Activated CD4-positive, alpha-beta T cell treated with anti-CD3 and anti-CD28 coated beads for 36 hours (primary cell): ENCODE measurements at regions of chr19 and their contacts with region 1.

Region 1: DNA sequence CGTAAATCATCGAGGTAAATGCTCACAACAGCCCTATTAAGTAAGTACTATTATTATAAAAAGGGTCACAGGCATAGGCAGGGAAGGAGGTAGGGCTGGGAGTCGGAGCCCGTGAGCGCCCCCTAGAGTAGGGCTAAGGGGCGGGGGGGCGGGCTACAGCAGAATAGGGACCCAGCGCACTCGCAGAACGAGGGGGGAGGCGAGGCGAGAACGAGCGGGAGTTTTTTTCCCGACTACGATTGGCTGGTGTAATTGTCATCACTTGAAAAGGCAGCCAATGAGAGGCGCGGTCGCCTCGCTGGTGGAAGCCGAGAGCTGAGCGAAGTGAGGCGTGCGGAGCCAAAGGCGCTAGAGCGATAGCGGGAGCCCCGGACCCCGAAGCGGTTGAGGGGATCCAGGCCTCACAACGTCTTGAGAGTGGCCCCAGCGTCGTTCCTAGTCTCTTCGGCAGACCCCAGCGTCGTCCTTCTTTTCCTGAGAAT is 24.2 kb downstream of the KEAP1 start:
- DNase-seq: peak; percentile 94
- ATAC-seq: peak; percentile 99
- H3K4me3 Mint-ChIP-seq: peak overlapping the region; percentile 38
- H3K27ac Mint-ChIP-seq: peak overlapping the region; percentile 47
- H3K4me1 Mint-ChIP-seq: peaks cover 13% of the 10 kb centered on the region
- H3K27me3 Mint-ChIP-seq: no peaks in the 10 kb centered on the region

Region 2: GRCh38 chr19:10292206-10292788 is 186.6 kb before region 1 on chr19:
- CTCF ChIA-PET with region 1: no interaction called
- POLR2A ChIA-PET with region 1: no interaction called
- intact Hi-C with region 1: loop called in 1 of 2 experiments (anchors 1 kb)
- DNase-seq: peak; percentile 92
- ATAC-seq: peak; percentile 63
- H3K4me3 Mint-ChIP-seq: peak overlapping the region; percentile 66
- H3K27ac Mint-ChIP-seq: no peak overlapping the region
- H3K4me1 Mint-ChIP-seq: peaks cover 59% of the 10 kb centered on the region
- H3K27me3 Mint-ChIP-seq: peaks cover 70% of the 10 kb centered on the region

Region 3: DNA sequence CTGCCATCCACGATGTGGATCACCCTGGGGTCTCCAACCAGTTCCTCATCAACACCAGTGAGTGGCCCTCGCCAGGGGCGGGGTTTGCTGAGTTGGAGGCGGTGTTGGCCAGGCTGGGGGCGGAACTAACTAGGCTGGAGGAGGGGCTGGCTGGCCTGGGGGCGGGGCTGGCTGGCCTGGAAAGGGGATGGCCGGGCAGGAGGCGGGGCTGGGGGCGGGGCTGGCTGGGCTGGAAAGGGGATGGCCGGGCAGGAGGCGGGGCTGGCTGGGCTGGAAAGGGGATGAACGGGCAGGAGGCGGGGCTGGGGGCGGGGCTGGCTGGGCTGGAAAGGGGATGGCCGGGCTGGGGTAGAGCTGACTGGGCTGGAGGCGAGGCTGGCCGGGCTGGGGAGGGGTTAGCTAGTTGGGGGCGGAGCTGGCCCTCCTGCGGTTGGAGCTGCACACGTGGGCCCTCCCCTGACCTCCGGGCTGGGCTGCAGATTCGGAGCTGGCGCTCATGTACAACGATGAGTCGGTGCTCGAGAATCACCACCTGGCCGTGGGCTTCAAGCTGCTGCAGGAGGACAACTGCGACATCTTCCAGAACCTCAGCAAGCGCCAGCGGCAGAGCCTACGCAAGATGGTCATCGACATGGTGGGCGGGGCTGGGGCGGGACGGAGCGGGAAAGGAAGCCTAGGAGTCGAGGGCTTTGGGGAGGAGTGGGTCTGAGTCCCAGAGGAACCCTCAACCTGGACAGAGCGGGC is 17.7 kb before region 1 on chr19:
- CTCF ChIA-PET with region 1: interaction called, 6 read pairs
- POLR2A ChIA-PET with region 1: no interaction called
- intact Hi-C with region 1: loop called in 1 of 2 experiments (anchors 1 kb)
- DNase-seq: peak; percentile 98
- ATAC-seq: peak; percentile 98
- H3K4me3 Mint-ChIP-seq: peak overlapping the region; percentile 43
- H3K27ac Mint-ChIP-seq: no peak overlapping the region
- H3K4me1 Mint-ChIP-seq: peaks cover 9% of the 10 kb centered on the region
- H3K27me3 Mint-ChIP-seq: peaks cover 3% of the 10 kb centered on the region

Region 4: DNA sequence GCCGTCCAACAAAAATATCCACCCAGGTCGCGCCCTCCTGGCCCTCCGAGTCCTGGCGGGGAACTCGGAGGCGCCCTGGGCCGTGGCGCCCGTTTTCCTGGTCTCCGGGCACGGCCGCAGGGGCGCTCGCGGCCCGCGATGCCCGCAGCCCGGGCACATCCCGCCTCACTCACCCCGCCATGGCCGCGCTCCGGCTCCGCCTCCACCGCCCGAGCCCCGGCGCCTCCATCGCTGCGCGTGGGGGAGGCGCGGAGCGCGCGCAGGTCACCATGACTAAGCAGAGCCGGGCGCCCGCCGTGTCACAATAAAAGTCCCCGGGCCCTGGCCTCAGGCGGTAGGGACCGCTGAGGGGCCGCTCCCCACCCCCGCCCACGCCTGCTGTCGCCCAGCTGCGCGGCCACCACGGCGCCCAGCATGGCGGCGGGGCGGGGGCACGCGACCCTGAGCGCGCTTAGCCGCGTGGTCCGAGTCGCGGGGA is 23.6 kb after region 1 on chr19:
- CTCF ChIA-PET with region 1: interaction called, 5 read pairs
- POLR2A ChIA-PET with region 1: interaction called, 5 read pairs
- intact Hi-C with region 1: loop called (anchors 1 to 2 kb)
- DNase-seq: peak; percentile 95
- ATAC-seq: peak; percentile 91
- H3K4me3 Mint-ChIP-seq: peak overlapping the region; percentile 91
- H3K27ac Mint-ChIP-seq: peak overlapping the region; percentile 95
- H3K4me1 Mint-ChIP-seq: peaks cover 30% of the 10 kb centered on the region
- H3K27me3 Mint-ChIP-seq: no peaks in the 10 kb centered on the region

Region 5: DNA sequence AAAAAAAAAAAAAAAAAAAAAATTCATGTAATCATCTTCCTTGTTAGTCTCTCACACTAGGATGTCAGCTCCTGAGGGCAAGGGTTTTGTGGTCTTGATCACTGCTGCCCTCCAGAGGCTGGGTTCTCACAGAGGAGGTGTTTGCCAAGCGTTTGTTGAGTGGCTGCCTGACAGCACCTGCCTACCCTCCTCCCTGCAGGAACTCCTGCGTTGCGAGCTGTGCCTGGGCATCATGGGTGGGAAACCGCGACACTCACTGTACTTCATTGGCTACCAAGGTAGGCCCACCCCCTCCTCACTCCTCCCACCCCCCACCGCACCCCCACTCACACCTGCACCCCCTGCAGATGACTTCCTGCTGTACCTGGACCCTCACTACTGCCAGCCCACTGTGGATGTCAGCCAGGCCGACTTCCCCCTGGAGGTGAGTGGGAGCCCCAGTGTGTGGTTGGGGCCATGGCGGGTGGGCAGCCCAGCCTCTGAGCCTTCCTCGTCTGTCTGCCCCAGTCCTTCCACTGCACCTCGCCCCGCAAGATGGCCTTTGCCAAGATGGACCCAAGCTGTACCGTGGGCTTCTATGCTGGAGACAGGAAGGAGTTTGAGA is 72.9 kb after region 1 on chr19:
- CTCF ChIA-PET with region 1: interaction called, 5 read pairs
- POLR2A ChIA-PET with region 1: no interaction called
- intact Hi-C with region 1: loop called in 1 of 2 experiments (anchors 1 kb)
- DNase-seq: peak; percentile 76
- ATAC-seq: peak; percentile 47
- H3K4me3 Mint-ChIP-seq: no peak overlapping the region
- H3K27ac Mint-ChIP-seq: no peak overlapping the region
- H3K4me1 Mint-ChIP-seq: peaks cover 38% of the 10 kb centered on the region
- H3K27me3 Mint-ChIP-seq: no peaks in the 10 kb centered on the region

Region 6: GRCh38 chr19:10695401-10696398 is 216.8 kb after region 1 on chr19:
- CTCF ChIA-PET with region 1: interaction called, 9 read pairs
- POLR2A ChIA-PET with region 1: no interaction called
- intact Hi-C with region 1: loop called in 1 of 2 experiments (anchors 5 kb)
- DNase-seq: peak; percentile 95
- ATAC-seq: peak; percentile 99
- H3K4me3 Mint-ChIP-seq: peak overlapping the region; percentile 59
- H3K27ac Mint-ChIP-seq: no peak overlapping the region
- H3K4me1 Mint-ChIP-seq: peaks cover 13% of the 10 kb centered on the region
- H3K27me3 Mint-ChIP-seq: no peaks in the 10 kb centered on the region